ENCODE measurements at regions of chr5 and their contacts with region 1.

Region 1: GRCh38 chr5:144191998-144192397 is 21.3 kb downstream of the KCTD16 start:
- DNase-seq: peak in 7 of 9 experiments; percentile 15 to 93 (median 32)
- ATAC-seq: peak; percentile 43
- H3K4me3 ChIP-seq: peak overlapping the region; percentile 7 to 27
- H3K4me3 Mint-ChIP-seq: no peak overlapping the region
- H3K27ac ChIP-seq: peak overlapping the region; percentile 9 to 81
- H3K27ac Mint-ChIP-seq: no peak overlapping the region
- H3K4me1 ChIP-seq: peaks cover 49% of the 10 kb centered on the region
- H3K4me1 Mint-ChIP-seq: peaks cover 43% of the 10 kb centered on the region
- H3K27me3 ChIP-seq: no peaks in the 10 kb centered on the region
- H3K27me3 Mint-ChIP-seq: no peaks in the 10 kb centered on the region
- CTCF ChIP-seq: peak; percentile 68

Region 2: DNA sequence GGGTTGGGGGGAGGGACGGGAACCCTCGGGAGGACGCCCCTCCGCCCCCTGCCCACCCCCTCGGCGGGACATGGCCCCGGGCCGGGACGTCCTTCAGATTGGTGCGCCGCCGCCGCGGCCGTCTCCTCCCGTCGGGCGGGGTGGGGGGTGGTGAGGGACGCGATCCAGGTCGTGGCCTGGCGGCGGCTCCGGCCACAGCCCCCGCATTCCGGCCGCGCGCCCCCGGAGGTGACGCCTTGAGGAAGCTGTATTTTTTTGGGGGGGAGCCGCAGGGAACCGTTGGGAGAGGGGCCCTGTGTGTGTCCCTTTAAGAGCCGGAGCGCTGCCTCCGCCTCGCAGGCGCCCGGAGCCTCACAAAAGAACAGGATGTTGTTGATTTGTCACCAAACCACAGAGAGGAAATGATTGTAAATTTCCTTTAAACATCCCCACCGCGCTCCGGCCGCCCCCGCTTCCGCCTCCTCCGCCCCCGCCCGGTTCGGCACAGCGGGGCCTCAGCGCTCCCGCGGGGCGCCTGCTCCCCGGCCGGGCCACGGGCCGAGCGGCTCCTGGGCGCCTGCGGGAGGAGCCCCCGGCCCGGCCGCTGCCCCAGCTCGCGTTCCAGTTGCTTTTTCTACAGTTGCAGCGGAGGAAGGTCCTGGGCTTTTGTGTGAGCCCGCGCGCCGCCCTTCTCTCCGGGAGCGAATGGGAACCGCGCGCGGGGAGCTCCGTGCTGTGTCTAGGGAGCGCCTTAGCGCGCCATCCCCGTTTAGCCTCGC is 1835.1 kb before region 1 on chr5:
- CTCF ChIA-PET with region 1: no interaction called
- POLR2A ChIA-PET with region 1: no interaction called
- intact Hi-C with region 1: loop called in 1 of 2 experiments (anchors 5 kb)
- DNase-seq: peak; percentile 72 to 93 (median 87)
- ATAC-seq: peak; percentile 82
- H3K4me3 ChIP-seq: peak overlapping the region; percentile 53 to 77
- H3K4me3 Mint-ChIP-seq: peak overlapping the region; percentile 86
- H3K27ac ChIP-seq: peak overlapping the region; percentile 40 to 63
- H3K27ac Mint-ChIP-seq: peak overlapping the region; percentile 88
- H3K4me1 ChIP-seq: peaks cover 33% of the 10 kb centered on the region
- H3K4me1 Mint-ChIP-seq: peaks cover 51% of the 10 kb centered on the region
- H3K27me3 ChIP-seq: no peaks in the 10 kb centered on the region
- H3K27me3 Mint-ChIP-seq: no peaks in the 10 kb centered on the region
- CTCF ChIP-seq: no peak

Region 3: GRCh38 chr5:142922223-142922952 is 1269.6 kb before region 1 on chr5:
- CTCF ChIA-PET with region 1: no interaction called
- POLR2A ChIA-PET with region 1: no interaction called
- intact Hi-C with region 1: loop called (anchors 5 to 10 kb)
- DNase-seq: peak in 2 of 9 experiments; percentile 50 to 67
- ATAC-seq: no peak
- H3K4me3 ChIP-seq: no peak overlapping the region
- H3K4me3 Mint-ChIP-seq: no peak overlapping the region
- H3K27ac ChIP-seq: peak overlapping the region in 1 of 2 experiments; percentile 21
- H3K27ac Mint-ChIP-seq: peak overlapping the region; percentile 37
- H3K4me1 ChIP-seq: peaks cover 7% of the 10 kb centered on the region
- H3K4me1 Mint-ChIP-seq: peaks cover 34% of the 10 kb centered on the region
- H3K27me3 ChIP-seq: no peaks in the 10 kb centered on the region
- H3K27me3 Mint-ChIP-seq: no peaks in the 10 kb centered on the region
- CTCF ChIP-seq: no peak

Region 4: GRCh38 chr5:143435210-143435657 is 756.8 kb before region 1 on chr5:
- CTCF ChIA-PET with region 1: interaction called, 6 read pairs
- POLR2A ChIA-PET with region 1: interaction called, 3 read pairs
- intact Hi-C with region 1: loop called in 1 of 2 experiments (anchors 10 kb)
- DNase-seq: peak in 7 of 9 experiments; percentile 12 to 78 (median 49)
- ATAC-seq: peak; percentile 62
- H3K4me3 ChIP-seq: peak overlapping the region; percentile 44 to 52
- H3K4me3 Mint-ChIP-seq: peak overlapping the region; percentile 94
- H3K27ac ChIP-seq: peak overlapping the region; percentile 64 to 70
- H3K27ac Mint-ChIP-seq: peak overlapping the region; percentile 97
- H3K4me1 ChIP-seq: peaks cover 24% of the 10 kb centered on the region
- H3K4me1 Mint-ChIP-seq: peaks cover 69% of the 10 kb centered on the region
- H3K27me3 ChIP-seq: no peaks in the 10 kb centered on the region
- H3K27me3 Mint-ChIP-seq: no peaks in the 10 kb centered on the region
- CTCF ChIP-seq: no peak

Region 5: DNA sequence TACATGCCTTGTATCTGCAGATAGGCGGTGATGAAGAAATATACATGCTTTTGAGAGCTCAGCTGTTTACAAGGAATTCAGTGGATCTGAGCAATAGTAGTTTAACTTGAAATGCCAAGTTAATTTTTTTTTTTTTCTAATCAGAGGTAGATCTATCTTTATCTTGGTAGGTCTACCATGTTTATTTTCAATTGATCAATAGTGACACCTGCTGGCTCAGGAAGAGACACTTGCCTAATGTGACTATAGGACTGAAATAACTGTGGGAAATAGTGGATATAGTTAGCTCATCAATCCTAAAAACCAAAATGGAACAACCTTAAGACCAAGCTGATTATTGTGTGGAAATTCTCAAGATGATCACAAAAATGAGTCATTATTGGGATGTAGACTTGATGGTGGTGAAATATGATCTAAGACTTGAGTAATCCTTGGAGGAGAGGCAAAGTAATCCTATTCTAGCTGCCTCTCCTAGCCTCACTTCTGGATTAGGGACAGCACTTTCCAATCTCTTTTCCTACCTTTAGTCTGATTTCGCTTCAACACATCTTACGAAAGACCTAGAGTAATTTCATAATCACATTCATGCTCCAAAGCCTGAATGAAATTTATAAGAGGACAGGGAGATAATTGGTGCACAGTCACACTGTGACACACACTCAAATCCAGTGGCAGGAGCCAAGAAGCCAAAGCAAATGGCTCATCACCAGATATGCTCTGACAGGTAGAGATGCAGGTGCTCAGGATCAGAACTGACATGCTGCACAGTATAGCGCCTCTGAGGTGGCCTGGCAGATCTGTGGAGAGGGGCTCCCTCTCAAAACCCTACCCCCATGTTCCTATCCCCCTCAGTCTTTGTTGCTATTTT is 223.8 kb before region 1 on chr5:
- CTCF ChIA-PET with region 1: interaction called, 5 read pairs
- POLR2A ChIA-PET with region 1: no interaction called
- intact Hi-C with region 1: loop called in 1 of 2 experiments (anchors 10 kb)
- DNase-seq: peak in 2 of 9 experiments; percentile 27 to 52
- ATAC-seq: no peak
- H3K4me3 ChIP-seq: no peak overlapping the region
- H3K4me3 Mint-ChIP-seq: no peak overlapping the region
- H3K27ac ChIP-seq: no peak overlapping the region
- H3K27ac Mint-ChIP-seq: no peak overlapping the region
- H3K4me1 ChIP-seq: no peaks in the 10 kb centered on the region
- H3K4me1 Mint-ChIP-seq: no peaks in the 10 kb centered on the region
- H3K27me3 ChIP-seq: no peaks in the 10 kb centered on the region
- H3K27me3 Mint-ChIP-seq: peaks cover 8% of the 10 kb centered on the region
- CTCF ChIP-seq: no peak

Region 6: DNA sequence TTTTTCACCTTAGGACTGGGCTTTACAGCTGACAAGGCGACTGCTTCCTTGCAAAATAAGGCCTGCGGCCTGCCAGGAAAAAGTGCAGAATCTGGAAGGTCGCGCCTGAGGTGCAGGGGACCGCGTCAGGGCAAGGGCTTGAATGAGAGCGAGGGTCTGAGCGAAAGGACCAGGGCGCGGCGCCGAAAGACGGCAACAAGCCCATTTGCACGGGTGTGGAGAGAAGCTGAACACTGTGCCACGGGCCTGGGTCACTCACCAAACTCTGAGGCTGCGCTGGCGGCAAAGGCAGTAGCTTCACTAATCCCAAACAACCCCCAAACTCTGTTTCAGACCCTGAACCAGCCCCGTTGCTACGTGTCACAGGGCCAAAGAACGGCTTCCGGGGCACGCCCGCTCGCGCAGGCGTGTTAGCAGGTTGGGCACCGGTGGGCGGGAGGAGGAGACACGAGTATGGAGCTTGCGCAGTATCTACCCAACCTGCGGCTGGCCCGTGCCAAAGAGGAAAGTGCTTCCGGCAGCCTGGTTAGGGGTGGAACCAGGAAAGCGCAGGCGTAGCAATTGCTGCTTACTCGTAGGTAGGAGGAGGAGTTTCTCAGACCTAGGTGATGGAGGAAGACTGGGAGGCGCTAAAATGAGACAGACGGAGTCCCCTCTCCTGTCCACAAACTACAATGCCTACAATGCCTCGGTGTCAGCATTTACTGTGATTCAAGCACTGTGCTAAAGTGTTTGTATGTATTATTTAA is 21.5 kb before region 1 on chr5 and contains the starts of genes KCTD16 and YIPF5:
- CTCF ChIA-PET with region 1: interaction called, 15 read pairs
- POLR2A ChIA-PET with region 1: interaction called, 21 read pairs
- intact Hi-C with region 1: loop called (anchors 1 kb)
- DNase-seq: peak; percentile 94 to 99 (median 96)
- ATAC-seq: peak; percentile 96
- H3K4me3 ChIP-seq: peak within 1 kb of the TSS; percentile 81 to 94
- H3K4me3 Mint-ChIP-seq: peak within 1 kb of the TSS; percentile 89
- H3K27ac ChIP-seq: peak within 1 kb of the TSS; percentile 92 to 94
- H3K27ac Mint-ChIP-seq: peak within 1 kb of the TSS; percentile 96
- H3K4me1 ChIP-seq: peaks cover 21% of the 10 kb centered on the region
- H3K4me1 Mint-ChIP-seq: peaks cover 51% of the 10 kb centered on the region
- H3K27me3 ChIP-seq: no peaks in the 10 kb centered on the region
- H3K27me3 Mint-ChIP-seq: no peaks in the 10 kb centered on the region
- CTCF ChIP-seq: no peak
- total RNA-seq, gene KCTD16: not detected
- total RNA-seq, gene YIPF5: 62.8 to 64.6 TPM

Measured in CD8-positive, alpha-beta T cell (primary cell).